ENCODE measurements at regions of chr3 and their contacts with region 1.

Region 1: DNA sequence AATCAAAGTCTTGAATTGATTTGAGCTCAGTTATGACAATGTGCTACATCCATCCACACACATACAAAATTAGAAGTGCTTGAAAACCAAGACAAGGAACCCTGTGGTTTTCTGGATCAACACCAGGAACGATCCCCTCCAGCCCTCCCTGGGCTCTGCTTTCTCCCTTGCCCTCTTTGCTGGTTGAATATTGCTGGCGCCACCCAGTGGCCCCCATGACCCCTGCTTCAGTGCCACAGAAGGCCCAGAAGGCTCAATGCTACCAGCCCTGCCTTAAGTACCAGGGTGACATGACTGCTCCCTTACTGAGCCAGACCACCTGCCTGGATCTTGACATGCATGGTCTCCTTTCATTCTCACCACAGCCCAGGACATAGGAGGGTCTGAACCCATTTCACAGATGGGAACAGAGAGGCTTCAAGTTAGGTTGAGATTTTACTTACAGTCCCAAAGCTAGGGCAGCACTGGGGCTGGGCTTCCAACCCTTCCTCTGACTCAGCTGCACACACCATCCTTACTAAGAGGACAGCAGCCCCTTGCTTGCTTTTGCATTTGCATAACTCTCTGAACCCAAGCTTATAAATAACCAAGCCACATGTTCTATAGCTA is 15.0 kb downstream of the IL12A start:
- DNase-seq: peak; percentile 49

Region 2: GRCh38 chr3:159884661-159885402 is 118.8 kb before region 1 on chr3:
- CTCF ChIA-PET with region 1: interaction called, 21 read pairs
- POLR2A ChIA-PET with region 1: no interaction called
- DNase-seq: peak; percentile 50

Region 3: DNA sequence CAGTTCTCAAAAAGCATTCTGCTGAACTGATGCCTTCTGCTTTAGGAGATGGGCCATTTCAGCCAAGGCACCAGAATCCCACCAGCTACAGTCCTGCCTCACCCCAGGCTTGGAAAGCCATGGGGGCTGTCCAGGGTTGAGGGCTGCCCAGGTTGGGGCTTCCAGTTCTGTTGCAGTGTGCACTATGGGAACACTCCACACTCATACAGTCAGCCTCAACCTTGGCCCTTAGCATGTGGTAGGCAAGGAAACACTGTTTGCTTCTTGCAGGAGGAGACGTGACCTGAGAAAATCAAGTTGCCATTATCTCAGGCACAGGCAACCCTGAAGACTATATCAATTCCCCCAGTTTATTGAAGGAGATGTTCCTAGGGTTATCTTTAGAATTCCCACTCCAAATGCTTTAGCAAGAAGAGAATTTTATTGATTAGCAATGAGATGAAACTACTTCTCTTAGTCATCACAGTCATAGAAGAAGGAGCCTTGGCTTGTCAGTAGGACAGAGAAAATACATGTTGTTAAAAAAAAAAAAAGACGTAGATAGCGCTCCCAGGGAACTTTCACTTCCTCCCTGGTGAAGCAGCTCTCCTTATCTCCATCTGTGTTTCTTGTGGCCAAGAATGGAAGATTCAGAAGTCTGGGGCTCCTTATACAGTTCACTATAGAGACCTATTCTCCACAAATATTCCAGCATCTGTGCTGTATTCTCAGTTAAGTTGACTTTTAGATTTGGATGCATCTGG is 53.3 kb before region 1 on chr3:
- CTCF ChIA-PET with region 1: no interaction called
- POLR2A ChIA-PET with region 1: no interaction called
- DNase-seq: no peak

Region 4: DNA sequence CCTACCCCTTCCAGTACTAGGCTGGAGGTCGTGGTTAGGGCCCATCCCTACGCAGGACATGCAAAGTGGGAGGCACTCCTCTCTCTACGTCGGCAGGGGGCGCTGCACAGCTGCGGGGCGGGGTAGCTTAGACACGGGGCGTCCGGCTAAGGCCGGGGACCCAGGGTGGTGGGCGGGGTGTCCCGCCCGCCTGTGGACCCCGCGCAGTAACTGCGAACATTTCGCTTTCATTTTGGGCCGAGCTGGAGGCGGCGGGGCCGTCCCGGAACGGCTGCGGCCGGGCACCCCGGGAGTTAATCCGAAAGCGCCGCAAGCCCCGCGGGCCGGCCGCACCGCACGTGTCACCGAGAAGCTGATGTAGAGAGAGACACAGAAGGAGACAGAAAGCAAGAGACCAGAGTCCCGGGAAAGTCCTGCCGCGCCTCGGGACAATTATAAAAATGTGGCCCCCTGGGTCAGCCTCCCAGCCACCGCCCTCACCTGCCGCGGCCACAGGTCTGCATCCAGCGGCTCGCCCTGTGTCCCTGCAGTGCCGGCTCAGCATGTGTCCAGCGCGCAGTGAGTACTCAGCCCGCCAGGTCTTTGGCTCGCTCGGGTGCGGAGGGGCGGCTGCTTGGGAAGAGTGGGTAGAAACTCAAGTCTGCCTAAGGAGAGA is 14.9 kb before region 1 on chr3 and contains the start of gene IL12A:
- CTCF ChIA-PET with region 1: interaction called, 20 read pairs
- POLR2A ChIA-PET with region 1: no interaction called
- DNase-seq: peak; percentile 83

Region 5: GRCh38 chr3:160016972-160017371 is 13.3 kb after region 1 on chr3:
- CTCF ChIA-PET with region 1: no interaction called
- POLR2A ChIA-PET with region 1: no interaction called
- DNase-seq: no peak

Region 6: DNA sequence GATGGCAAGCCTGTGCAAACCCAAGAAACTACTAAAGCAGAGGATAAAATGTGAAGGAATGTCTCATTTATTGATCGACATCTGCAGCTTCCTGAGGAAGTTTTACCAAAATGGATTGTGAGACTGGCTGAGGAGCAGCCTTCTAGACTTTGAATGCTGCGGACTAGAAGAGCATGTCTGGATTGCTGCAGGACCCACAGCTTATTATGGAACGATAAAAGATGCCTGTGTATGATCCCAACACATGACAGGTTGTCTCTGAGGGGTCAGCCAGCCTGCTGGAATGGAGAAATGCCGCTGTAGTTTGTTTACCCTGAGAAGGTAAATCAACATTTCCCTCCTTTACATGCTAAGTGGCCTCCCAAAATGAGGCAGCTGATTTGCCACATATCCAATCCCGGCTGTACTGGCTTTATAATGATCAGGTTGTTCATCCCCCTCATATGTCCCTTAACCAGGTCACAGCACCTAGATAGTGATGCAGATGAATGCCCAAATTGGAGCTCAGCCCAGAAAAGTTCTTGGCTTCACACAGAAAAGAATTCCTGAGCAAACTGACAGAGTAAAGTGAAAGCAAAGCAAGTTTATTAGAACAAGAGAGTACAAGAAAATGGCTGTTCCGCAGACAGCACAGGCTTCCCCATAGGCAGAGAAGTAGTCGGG is 48.9 kb after region 1 on chr3:
- CTCF ChIA-PET with region 1: no interaction called
- POLR2A ChIA-PET with region 1: no interaction called
- DNase-seq: no peak

Measured in HEK293T (cell line).